ENCODE measurements at regions of chr14 and their contacts with region 1.

Region 1: GRCh38 chr14:72516936-72517700 is 376.8 kb downstream of the DPF3 start:
- DNase-seq: peak; percentile 71
- H3K4me3 ChIP-seq: no peak overlapping the region
- H3K27ac ChIP-seq: no peak overlapping the region
- H3K4me1 ChIP-seq: no peaks in the 10 kb centered on the region
- H3K27me3 ChIP-seq: no peaks in the 10 kb centered on the region
- CTCF ChIP-seq: peak; percentile 88

Region 2: DNA sequence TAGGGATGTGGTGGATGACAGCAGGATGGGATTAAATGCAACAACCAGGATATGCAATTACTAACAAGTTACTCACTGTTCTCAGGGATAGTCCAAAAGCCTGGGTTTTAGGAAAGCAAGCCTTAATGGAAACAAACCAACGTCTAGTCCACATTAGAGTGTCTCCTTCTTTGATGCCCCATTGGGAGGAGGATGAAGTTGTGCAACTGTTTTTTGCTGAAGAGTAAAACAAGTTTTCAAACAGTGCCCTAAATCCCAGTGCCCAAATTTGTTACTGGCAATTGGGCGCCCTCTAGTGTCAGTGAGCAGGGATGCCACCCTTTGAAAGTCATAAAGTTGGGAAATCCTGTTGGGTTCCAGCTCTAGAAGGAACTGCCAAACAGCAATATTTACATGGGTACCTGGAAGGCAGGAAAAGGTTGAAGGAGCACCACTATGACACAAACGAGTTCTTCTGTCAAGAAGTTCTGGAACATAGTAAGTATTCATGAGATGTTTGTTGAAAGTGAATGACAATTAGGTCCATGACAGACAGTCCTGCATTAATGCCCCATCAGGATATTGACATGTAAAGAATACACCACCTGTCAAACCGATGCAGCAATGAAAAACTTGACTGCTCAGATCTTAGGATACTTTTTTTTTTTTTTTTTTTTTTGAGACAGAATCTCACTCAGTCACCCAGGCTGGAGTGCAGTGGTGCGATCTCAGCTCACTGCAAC is 387.9 kb after region 1 on chr14:
- intact Hi-C with region 1: loop called (anchors 2 kb)
- DNase-seq: peak; percentile 69
- H3K4me3 ChIP-seq: no peak overlapping the region
- H3K27ac ChIP-seq: no peak overlapping the region
- H3K4me1 ChIP-seq: no peaks in the 10 kb centered on the region
- H3K27me3 ChIP-seq: no peaks in the 10 kb centered on the region
- CTCF ChIP-seq: peak; percentile 88

Region 3: GRCh38 chr14:72947366-72948160 is 430.4 kb after region 1 on chr14:
- intact Hi-C with region 1: loop called (anchors 2 kb)
- DNase-seq: no peak
- H3K4me3 ChIP-seq: no peak overlapping the region
- H3K27ac ChIP-seq: no peak overlapping the region
- H3K4me1 ChIP-seq: no peaks in the 10 kb centered on the region
- H3K27me3 ChIP-seq: no peaks in the 10 kb centered on the region
- CTCF ChIP-seq: no peak